Testis (tissue), 5 donors: ENCODE measurements at regions of chr4 and their contacts with region 1.

Region 1: GRCh38 chr4:151117371-151117962 is 18.0 kb downstream of the RPS3A start:
- DNase-seq: peak; percentile 84
- H3K4me3 ChIP-seq: no peak overlapping the region
- H3K27ac ChIP-seq: no peak overlapping the region
- H3K4me1 ChIP-seq: no peaks in the 10 kb centered on the region
- H3K27me3 ChIP-seq: no peaks in the 10 kb centered on the region
- CTCF ChIP-seq: peak; percentile 62 to 71 (median 65)
- POLR2A ChIP-seq: no peak

Region 2: GRCh38 chr4:150986085-150986484 is 131.4 kb before region 1 on chr4:
- intact Hi-C with region 1: no loop called
- DNase-seq: no peak
- H3K4me3 ChIP-seq: no peak overlapping the region
- H3K27ac ChIP-seq: no peak overlapping the region
- H3K4me1 ChIP-seq: no peaks in the 10 kb centered on the region
- H3K27me3 ChIP-seq: no peaks in the 10 kb centered on the region
- CTCF ChIP-seq: no peak
- POLR2A ChIP-seq: no peak

Region 3: DNA sequence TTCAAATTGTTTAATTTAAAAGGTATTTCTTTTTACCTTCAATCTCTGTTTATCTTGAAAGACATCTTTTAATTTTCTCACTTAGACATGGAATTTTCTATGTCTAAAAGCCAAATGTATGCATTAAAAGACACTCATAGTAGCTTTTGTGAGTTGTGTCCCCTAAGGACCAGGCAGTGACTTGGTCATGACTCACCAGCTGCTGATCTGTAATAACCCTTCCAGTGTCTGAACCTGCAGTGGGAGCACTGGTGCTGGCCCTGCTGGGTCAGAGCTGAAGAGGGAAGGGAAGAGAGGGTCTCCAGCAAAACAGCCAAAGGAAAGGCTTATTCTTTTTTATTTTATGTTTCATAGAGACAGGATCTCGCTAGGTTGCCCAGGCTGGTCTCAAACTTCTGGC is 239.0 kb after region 1 on chr4:
- intact Hi-C with region 1: loop called (anchors 10 kb)
- DNase-seq: no peak
- H3K4me3 ChIP-seq: no peak overlapping the region
- H3K27ac ChIP-seq: no peak overlapping the region
- H3K4me1 ChIP-seq: no peaks in the 10 kb centered on the region
- H3K27me3 ChIP-seq: no peaks in the 10 kb centered on the region
- CTCF ChIP-seq: no peak
- POLR2A ChIP-seq: no peak